ENCODE measurements at regions of chr15 and their contacts with region 1.

Region 1: DNA sequence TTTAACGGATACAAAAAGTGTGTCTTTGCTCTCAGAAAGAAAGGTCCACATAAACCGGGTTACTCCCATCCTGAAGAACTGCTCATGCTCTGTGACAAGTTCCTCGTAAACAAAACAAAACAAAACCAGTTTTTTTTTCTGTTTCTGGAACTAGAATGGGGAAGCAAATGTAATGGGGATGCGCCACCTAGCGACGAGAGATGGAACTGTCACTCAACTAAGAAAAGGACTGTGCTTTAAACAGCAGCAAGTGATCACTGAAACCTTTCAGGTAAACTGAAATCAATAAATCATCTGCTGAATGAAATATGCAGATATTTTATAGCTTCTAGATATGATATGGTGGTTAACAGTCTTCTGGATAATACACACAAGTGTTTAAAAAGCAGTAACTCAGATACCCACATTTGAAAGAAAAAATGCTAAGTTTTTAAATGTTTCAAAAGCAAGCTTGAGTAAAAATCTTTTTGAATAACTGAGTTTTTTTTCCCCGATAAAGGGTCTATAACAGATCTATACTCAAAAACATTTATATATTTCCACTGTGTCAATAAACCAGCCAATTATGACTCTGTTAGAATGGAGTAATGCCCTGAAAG is 10.9 kb downstream of the TM2D3 start:
- DNase-seq: peak; percentile 86
- ATAC-seq: peak; percentile 69
- H3K4me3 Mint-ChIP-seq: no peak overlapping the region
- H3K27ac Mint-ChIP-seq: peak overlapping the region; percentile 78
- H3K4me1 Mint-ChIP-seq: peaks cover 17% of the 10 kb centered on the region
- H3K27me3 Mint-ChIP-seq: no peaks in the 10 kb centered on the region

Region 2: DNA sequence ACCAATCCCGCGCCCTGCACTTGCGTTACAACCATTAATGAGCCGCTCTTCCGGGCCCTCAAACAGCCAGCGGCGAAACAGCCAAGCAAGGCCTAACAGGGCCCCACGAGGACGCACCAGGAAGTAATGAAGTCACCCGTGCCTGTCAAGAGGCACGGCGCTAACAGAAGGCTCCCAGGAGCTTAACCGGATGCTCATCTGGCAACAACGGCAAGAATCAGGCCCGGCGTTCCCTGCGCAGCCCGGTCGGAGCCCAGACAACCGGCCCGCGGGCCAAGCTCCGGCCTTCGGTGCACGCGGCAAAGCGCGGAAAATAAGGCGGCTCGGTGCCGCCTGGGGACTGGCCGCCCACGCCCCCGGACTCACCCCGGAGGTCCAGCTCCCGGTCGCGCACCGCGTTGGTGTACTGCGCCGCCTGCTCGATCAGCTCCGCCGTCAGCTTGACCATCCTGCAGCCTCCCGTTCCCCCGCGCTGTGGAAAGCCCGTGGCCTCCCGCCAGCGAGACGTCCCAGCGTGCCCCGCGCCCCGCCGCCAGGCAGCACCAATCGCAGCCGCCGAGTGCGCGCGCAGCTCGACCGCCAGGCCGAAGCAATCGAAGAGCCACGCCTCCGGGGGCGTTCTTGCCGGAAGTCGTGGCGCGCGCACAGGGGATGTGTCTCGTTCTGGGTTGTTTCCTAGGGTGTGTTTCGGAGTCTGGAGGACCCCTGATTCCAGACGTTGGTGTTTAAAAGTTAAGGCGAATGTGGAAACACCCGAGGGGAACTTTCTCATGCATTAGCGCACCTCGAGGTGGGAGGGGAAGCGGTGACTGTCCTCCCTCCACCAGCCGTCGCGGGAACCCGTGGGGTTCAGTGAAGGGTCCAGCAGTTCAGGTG is 346.3 kb before region 1 on chr15 and contains the start of gene SNRPA1:
- CTCF ChIA-PET with region 1: interaction called, 202 read pairs
- POLR2A ChIA-PET with region 1: interaction called, 13 read pairs
- DNase-seq: peak; percentile 97
- ATAC-seq: peak; percentile 87
- H3K4me3 Mint-ChIP-seq: peak within 1 kb of the TSS; percentile 98
- H3K27ac Mint-ChIP-seq: peak within 1 kb of the TSS; percentile 93
- H3K4me1 Mint-ChIP-seq: peaks cover 37% of the 10 kb centered on the region
- H3K27me3 Mint-ChIP-seq: no peaks in the 10 kb centered on the region
- total RNA-seq, gene SNRPA1: 138 to 144 TPM

Region 3: DNA sequence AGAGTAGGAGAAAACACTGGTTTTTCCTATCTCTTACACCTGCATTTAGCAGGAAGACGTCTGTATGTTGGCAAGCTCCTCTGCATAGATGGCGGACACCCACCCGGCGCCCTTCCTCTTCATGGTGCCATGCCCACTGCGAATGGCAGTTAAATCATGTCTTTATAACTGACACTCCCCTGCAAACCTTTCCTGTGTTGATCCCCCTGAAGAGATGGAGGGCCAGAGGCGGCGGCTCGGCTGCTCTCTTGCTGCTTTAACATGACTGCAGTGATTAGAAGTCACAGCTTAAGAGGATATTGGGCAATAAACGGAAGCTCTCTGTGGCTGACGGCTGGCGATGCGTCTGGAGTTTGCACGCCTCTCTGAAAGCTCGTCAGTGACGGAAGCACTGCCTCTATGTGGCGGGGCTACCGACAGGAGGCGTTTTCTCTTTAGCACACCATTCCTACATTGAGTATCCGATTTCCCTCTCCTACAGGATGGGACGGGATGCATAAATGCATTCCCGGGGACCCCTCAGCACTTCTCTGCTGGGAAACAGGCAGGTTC is 320.7 kb before region 1 on chr15:
- CTCF ChIA-PET with region 1: interaction called, 24 read pairs
- POLR2A ChIA-PET with region 1: no interaction called
- DNase-seq: peak; percentile 90
- ATAC-seq: peak; percentile 95
- H3K4me3 Mint-ChIP-seq: peak overlapping the region; percentile 72
- H3K27ac Mint-ChIP-seq: peak overlapping the region; percentile 94
- H3K4me1 Mint-ChIP-seq: peaks cover 38% of the 10 kb centered on the region
- H3K27me3 Mint-ChIP-seq: no peaks in the 10 kb centered on the region

Region 4: DNA sequence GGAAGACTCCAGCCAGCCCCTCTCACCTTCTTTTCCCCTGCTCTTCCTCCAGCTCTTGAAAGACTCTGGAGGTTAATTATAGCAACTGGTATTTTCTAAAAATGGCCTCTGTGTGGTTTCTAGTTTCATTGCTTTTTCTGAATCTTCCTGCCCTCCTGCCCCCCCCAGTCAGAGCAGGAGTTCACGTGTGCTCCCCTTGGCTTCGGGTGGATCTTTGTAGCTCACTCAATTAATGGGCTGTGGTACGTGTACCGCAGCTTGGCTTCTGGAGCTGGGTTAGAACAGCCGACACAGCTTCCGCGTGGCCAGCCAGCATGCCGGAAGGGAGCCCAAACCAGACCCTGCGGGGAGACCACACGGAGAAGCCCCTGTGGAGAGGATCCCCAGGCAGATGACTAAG is 20.6 kb before region 1 on chr15:
- CTCF ChIA-PET with region 1: interaction called, 19 read pairs
- POLR2A ChIA-PET with region 1: no interaction called
- DNase-seq: no peak
- ATAC-seq: no peak
- H3K4me3 Mint-ChIP-seq: no peak overlapping the region
- H3K27ac Mint-ChIP-seq: no peak overlapping the region
- H3K4me1 Mint-ChIP-seq: peaks cover 23% of the 10 kb centered on the region
- H3K27me3 Mint-ChIP-seq: no peaks in the 10 kb centered on the region